ENCODE measurements at regions of chr1 and their contacts with region 1.

Region 1: DNA sequence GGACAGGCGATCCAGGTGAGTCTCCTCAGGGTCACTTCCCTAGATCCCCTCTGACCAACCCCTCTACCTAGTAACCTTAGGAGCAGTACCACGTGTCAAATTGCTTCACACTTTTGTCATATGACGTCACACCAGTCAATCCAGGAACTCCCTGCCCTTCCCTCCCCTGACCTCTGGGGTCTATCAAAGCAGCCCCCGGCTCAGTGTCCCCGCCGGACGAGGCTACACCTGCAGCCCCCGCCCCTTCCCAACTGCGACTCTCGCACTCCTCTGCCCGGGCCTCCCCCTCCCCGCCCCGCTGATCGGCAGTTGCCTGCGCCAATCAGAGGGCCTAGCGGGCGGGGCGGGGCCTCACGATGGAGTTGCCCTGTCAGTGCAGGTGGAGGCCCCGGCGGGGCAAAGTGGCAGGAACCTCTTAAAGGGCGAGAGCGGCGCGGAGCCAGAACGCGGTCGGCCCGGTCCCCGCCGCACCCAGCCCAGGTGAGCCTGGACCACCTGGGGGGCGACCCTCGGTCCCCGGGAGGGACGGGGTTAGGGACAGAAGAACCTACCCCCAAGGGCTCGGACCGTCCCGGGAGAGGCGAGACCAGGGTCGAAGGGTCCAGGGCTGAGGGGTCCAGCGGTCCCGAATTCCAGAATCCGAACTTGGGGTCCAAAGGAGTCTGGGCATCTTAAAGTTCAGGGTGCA is 27.5 kb upstream of the EPB41 start:
- DNase-seq: peak; percentile 93
- ATAC-seq: peak; percentile 64
- H3K4me3 Mint-ChIP-seq: peak overlapping the region; percentile 68
- H3K27ac Mint-ChIP-seq: 0 out of 2 replicates have a peak overlapping the region, but pooled peaks have one; percentile 14
- H3K4me1 Mint-ChIP-seq: peaks cover 46% of the 10 kb centered on the region
- H3K27me3 Mint-ChIP-seq: peaks cover 10% of the 10 kb centered on the region
- CTCF ChIP-seq: no peak

Region 2: DNA sequence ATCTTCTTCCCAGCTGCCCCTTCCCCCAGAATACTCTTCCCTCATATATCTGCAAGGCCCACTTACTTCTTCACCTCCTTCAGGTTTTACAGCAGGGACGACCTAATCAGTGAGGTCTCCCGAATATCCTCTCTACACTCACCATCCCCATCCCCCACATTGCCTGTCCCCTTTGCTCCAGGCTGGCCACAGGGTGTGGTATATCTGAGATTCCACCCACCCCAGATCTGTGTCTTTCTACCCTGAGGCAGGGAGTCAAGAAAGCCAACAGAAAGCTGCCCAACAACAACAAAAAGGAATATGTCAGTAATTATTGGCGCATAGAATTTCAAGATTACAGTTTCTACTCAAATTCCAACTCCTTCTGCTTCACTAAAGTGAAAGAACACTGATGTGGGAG is 104.9 kb before region 1 on chr1:
- CTCF ChIA-PET with region 1: interaction called, 14 read pairs
- POLR2A ChIA-PET with region 1: no interaction called
- DNase-seq: no peak
- ATAC-seq: no peak
- H3K4me3 Mint-ChIP-seq: no peak overlapping the region
- H3K27ac Mint-ChIP-seq: no peak overlapping the region
- H3K4me1 Mint-ChIP-seq: peaks cover 9% of the 10 kb centered on the region
- H3K27me3 Mint-ChIP-seq: no peaks in the 10 kb centered on the region; the same call in 1 of the 2 replicates
- CTCF ChIP-seq: no peak

Region 3: GRCh38 chr1:28865997-28866650 is 20.8 kb before region 1 on chr1:
- CTCF ChIA-PET with region 1: interaction called, 12 read pairs
- POLR2A ChIA-PET with region 1: no interaction called
- DNase-seq: no peak
- ATAC-seq: no peak
- H3K4me3 Mint-ChIP-seq: no peak overlapping the region
- H3K27ac Mint-ChIP-seq: no peak overlapping the region
- H3K4me1 Mint-ChIP-seq: 0 out of 2 replicates have a peak, but pooled peaks cover 3% of the 10 kb centered on the region
- H3K27me3 Mint-ChIP-seq: no peaks in the 10 kb centered on the region
- CTCF ChIP-seq: no peak

Region 4: DNA sequence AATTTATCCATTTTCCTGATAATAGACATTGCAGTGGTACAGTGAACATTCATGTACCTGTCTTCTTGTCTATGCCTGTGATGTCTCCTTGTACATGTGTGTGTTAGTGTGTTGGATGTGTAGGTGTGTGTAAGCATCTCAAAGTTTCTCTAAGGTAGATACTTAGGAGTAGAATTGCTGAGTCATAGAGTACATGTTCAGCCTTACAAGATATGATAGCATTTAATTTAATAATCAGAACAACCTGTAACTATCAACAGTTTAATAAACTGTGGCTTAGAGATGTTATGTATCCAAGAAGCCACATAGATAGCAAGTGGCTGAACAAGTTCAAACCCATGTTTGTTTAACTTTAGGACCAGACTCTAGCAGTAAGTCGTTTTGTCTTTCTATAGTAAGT is 63.1 kb after region 1 on chr1:
- CTCF ChIA-PET with region 1: no interaction called
- POLR2A ChIA-PET with region 1: no interaction called
- DNase-seq: no peak
- ATAC-seq: no peak
- H3K4me3 Mint-ChIP-seq: no peak overlapping the region
- H3K27ac Mint-ChIP-seq: peak overlapping the region; percentile 38
- H3K4me1 Mint-ChIP-seq: peaks cover 15% of the 10 kb centered on the region
- H3K27me3 Mint-ChIP-seq: no peaks in the 10 kb centered on the region
- CTCF ChIP-seq: no peak

Region 5: GRCh38 chr1:28983509-28984310 is 96.8 kb after region 1 on chr1:
- CTCF ChIA-PET with region 1: interaction called, 17 read pairs
- POLR2A ChIA-PET with region 1: interaction called, 4 read pairs
- DNase-seq: peak; percentile 47
- ATAC-seq: peak; percentile 91
- H3K4me3 Mint-ChIP-seq: peak overlapping the region; percentile 23
- H3K27ac Mint-ChIP-seq: peak overlapping the region; percentile 91
- H3K4me1 Mint-ChIP-seq: peaks cover 39% of the 10 kb centered on the region
- H3K27me3 Mint-ChIP-seq: no peaks in the 10 kb centered on the region
- CTCF ChIP-seq: no peak

Region 6: GRCh38 chr1:29117381-29117780 is 230.5 kb after region 1 on chr1:
- CTCF ChIA-PET with region 1: interaction called, 54 read pairs
- POLR2A ChIA-PET with region 1: interaction called, 5 read pairs
- DNase-seq: no peak
- ATAC-seq: no peak
- H3K4me3 Mint-ChIP-seq: no peak overlapping the region
- H3K27ac Mint-ChIP-seq: no peak overlapping the region
- H3K4me1 Mint-ChIP-seq: peaks cover 23% of the 10 kb centered on the region
- H3K27me3 Mint-ChIP-seq: peaks cover 10% of the 10 kb centered on the region
- CTCF ChIP-seq: no peak

Region 7: GRCh38 chr1:29145739-29146437 is 259.0 kb after region 1 on chr1:
- CTCF ChIA-PET with region 1: no interaction called
- POLR2A ChIA-PET with region 1: no interaction called
- DNase-seq: no peak
- ATAC-seq: no peak
- H3K4me3 Mint-ChIP-seq: no peak overlapping the region
- H3K27ac Mint-ChIP-seq: peak overlapping the region; percentile 79
- H3K4me1 Mint-ChIP-seq: no peaks in the 10 kb centered on the region
- H3K27me3 Mint-ChIP-seq: no peaks in the 10 kb centered on the region
- CTCF ChIP-seq: no peak

Region 8: GRCh38 chr1:29181413-29182225 is 294.7 kb after region 1 on chr1 and contains the start of gene SRSF4:
- CTCF ChIA-PET with region 1: interaction called, 25 read pairs
- POLR2A ChIA-PET with region 1: interaction called, 11 read pairs
- DNase-seq: peak; percentile 99
- ATAC-seq: peak; percentile 92
- H3K4me3 Mint-ChIP-seq: peak within 1 kb of the TSS; percentile 97
- H3K27ac Mint-ChIP-seq: peak within 1 kb of the TSS; percentile 99
- H3K4me1 Mint-ChIP-seq: peaks cover 64% of the 10 kb centered on the region
- H3K27me3 Mint-ChIP-seq: no peaks in the 10 kb centered on the region
- CTCF ChIP-seq: peak; percentile 49; the same call in 1 of the 2 replicates
- total RNA-seq, gene SRSF4: 93.8 to 99.9 TPM (median 94.7 TPM) in 3 replicates

Region 9: GRCh38 chr1:29202584-29203340 is 315.9 kb after region 1 on chr1:
- CTCF ChIA-PET with region 1: interaction called, 57 read pairs
- POLR2A ChIA-PET with region 1: interaction called, 4 read pairs
- DNase-seq: peak; percentile 99
- ATAC-seq: peak; percentile 96
- H3K4me3 Mint-ChIP-seq: no peak overlapping the region
- H3K27ac Mint-ChIP-seq: peak overlapping the region; percentile 68; the same call in 1 of the 2 replicates
- H3K4me1 Mint-ChIP-seq: peaks cover 8% of the 10 kb centered on the region
- H3K27me3 Mint-ChIP-seq: no peaks in the 10 kb centered on the region
- CTCF ChIP-seq: peak; percentile 95

Measured in WTC11 (cell line).